ENCODE measurements at regions of chr7 and their contacts with region 1.

Region 1: GRCh38 chr7:135211179-135211945 is at the start of gene WDR91:
- DNase-seq: peak; percentile 94
- H3K4me3 Mint-ChIP-seq: peak within 1 kb of the TSS; percentile 91
- H3K27ac Mint-ChIP-seq: peak within 1 kb of the TSS; percentile 92
- H3K4me1 Mint-ChIP-seq: no peaks in the 10 kb centered on the region
- H3K27me3 Mint-ChIP-seq: no peaks in the 10 kb centered on the region
- CTCF ChIP-seq: no peak
- total RNA-seq, gene WDR91: 6.7 and 7.3 TPM in 2 replicates

Region 2: DNA sequence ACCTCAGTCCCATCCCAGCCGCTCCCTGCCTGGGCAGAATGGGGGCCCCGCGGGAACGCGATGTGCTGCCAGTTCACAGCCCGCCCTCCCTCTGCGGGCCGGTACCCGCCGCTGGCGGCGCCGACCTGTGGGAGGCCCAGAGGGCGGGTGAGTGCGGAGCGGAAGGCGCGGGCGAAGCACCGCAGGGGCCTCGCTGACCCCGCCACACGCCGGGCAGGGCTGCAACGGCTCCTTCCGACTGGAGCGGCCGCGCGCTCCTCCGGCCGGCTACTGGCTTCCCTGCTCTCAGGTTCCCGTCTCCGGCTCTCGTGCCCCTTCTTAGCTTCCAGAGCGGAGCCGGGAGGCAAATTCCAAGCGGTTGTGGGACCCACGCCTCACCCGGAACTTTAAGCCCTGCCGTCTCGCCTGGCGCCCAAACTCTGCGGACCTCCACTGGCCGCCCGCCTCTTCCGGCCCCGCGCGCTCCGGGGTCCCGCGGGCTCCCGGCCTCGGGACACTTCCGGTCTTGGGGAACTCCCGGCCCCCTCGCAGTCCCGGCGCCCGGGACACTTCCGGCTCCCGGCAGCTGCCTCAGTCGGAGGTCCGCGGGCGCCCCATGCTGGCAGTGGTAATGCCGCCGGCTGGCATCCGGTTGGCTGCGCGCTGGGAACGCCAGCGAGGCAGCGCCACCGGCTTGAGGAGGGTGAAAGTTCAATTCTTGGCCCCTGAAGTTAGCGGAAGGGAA is 40.9 kb before region 1 on chr7 and contains the start of gene CYREN:
- CTCF ChIA-PET with region 1: interaction called, 3 read pairs
- POLR2A ChIA-PET with region 1: interaction called, 78 read pairs
- intact Hi-C with region 1: loop called (anchors 1 kb)
- DNase-seq: peak; percentile 95
- H3K4me3 Mint-ChIP-seq: peak within 1 kb of the TSS; percentile 79
- H3K27ac Mint-ChIP-seq: peak within 1 kb of the TSS; percentile 88
- H3K4me1 Mint-ChIP-seq: peaks cover 34% of the 10 kb centered on the region
- H3K27me3 Mint-ChIP-seq: no peaks in the 10 kb centered on the region
- CTCF ChIP-seq: peak; percentile 44
- total RNA-seq, gene CYREN: 66.0 and 71.0 TPM in 2 replicates

Region 3: DNA sequence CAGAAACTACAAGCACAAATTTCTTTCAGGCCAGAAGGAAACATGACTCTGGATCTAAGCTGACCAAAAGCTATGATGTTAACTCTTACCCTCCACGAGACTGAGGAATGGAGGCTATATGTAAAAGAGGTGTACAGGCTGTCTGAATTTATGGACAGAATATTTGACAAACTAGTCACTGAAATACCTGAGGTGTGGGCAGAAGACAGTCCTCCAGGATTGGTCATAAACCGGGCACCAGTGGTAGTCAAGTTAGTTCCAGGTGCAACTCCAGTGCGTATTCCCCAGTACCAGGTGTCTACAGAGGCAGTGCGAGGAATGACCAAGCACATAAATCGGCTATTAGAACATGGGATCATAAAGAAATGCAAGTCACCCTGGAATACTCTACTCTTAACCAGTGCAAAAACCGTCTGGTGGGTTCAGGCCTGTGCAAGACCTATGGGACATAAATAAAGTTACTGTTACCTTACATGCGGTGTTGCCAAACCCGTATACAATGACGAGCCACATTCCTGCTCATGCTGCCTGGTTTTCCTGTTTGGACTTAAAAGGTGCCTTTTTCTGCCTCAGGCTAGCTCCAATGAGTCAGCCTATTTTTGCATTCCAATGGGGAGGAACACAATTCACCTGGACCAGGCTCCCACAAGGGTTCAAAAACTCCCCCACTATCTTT is 34.2 kb before region 1 on chr7:
- CTCF ChIA-PET with region 1: interaction called, 5 read pairs
- POLR2A ChIA-PET with region 1: interaction called, 78 read pairs
- intact Hi-C with region 1: no loop called
- DNase-seq: peak; percentile 95
- H3K4me3 Mint-ChIP-seq: peak overlapping the region; percentile 16
- H3K27ac Mint-ChIP-seq: peak overlapping the region; percentile 91
- H3K4me1 Mint-ChIP-seq: peaks cover 36% of the 10 kb centered on the region
- H3K27me3 Mint-ChIP-seq: no peaks in the 10 kb centered on the region
- CTCF ChIP-seq: no peak

Region 4: DNA sequence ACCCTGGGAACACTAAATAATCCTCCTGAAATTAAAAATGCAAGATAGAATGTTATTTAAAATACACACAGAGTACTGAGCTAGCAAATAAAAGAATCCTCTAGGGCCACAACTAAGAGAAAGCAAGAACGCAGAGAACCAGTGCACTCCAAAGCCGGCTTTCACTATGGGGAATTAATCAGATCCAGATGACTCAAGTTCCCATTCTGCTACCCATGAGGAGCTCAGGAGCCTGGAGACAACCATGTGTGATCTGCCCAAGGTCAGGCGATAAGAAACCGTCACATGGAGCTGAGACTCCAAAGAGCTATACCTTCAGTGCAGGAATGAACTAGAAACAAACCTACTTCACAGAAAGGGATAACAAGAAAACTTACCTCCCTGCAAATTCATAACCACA is 21.4 kb before region 1 on chr7:
- CTCF ChIA-PET with region 1: no interaction called
- POLR2A ChIA-PET with region 1: interaction called, 14 read pairs
- intact Hi-C with region 1: no loop called
- DNase-seq: no peak
- H3K4me3 Mint-ChIP-seq: no peak overlapping the region
- H3K27ac Mint-ChIP-seq: no peak overlapping the region
- H3K4me1 Mint-ChIP-seq: no peaks in the 10 kb centered on the region
- H3K27me3 Mint-ChIP-seq: no peaks in the 10 kb centered on the region
- CTCF ChIP-seq: no peak

Measured in MCF 10A (cell line).